ENCODE measurements at regions of chr15 and their contacts with region 1.

Region 1: DNA sequence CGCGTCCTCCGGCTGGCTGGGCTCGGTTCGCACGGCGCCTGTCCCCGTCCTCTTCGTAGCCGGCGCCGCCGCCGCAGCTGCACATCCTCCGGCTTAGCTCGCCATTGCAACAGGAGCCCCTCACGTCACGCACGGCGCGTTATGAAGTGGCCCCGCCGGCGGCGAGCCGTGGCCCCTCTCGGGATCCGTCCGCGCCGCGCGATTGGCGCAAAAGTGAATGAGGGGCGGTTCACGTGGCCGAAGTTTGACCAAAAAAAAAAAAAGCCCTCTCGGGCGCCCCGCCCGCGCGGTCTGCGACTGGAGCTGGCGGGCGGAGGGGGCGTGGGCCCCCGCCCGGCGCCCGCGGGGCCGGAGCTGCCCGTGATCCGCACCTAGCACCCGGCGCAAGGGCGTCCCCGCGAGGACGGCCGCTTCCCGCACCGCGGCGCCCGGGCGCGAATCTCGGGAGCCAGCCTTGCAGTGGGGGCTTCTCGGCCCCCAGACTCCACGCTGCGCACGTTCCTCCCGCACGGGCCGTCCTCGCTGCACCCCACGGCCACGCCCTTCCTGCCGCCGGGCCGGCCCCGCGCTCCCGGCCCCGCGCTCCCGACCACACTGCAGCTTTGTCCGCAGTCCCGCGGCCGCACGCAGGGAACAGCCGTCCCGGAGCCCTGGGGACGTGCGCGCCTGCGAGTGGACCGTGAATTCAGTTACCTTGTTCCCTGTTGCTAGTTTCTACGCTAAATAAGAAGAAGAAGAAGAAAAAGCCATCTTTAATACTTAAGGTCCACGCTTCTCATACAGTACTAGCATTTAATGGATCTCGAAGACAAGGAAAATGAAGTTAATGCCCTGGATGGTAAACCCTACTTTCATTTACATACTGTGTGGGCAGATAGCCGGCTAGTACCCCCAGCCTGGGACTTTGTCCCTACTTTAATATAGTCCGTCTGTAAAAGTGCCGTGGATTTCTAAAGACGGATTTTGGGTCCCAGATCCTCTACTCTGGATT is at the start of gene CHSY1:
- DNase-seq: peak; percentile 88
- ATAC-seq: peak; percentile 58
- H3K4me3 ChIP-seq: peak within 1 kb of the TSS; percentile 87
- H3K27ac ChIP-seq: no peak within 1 kb of the TSS
- H3K4me1 ChIP-seq: peaks cover 11% of the 10 kb centered on the region
- H3K27me3 ChIP-seq: no peaks in the 10 kb centered on the region
- CTCF ChIP-seq: 0 out of 2 replicates have a peak, but pooled peaks have one; percentile 20
- total RNA-seq, gene CHSY1: 13.8 and 19.5 TPM in 2 replicates

Region 2: GRCh38 chr15:101167753-101168463 is 84.2 kb before region 1 on chr15:
- CTCF ChIA-PET with region 1: no interaction called
- POLR2A ChIA-PET with region 1: interaction called, 6 read pairs
- intact Hi-C with region 1: loop called (anchors 1 kb)
- DNase-seq: peak; percentile 93
- ATAC-seq: peak; percentile 81
- H3K4me3 ChIP-seq: peak overlapping the region; percentile 55
- H3K27ac ChIP-seq: peak overlapping the region; percentile 94
- H3K4me1 ChIP-seq: peaks cover 53% of the 10 kb centered on the region
- H3K27me3 ChIP-seq: no peaks in the 10 kb centered on the region
- CTCF ChIP-seq: no peak

Region 3: GRCh38 chr15:101188637-101189408 is 63.3 kb before region 1 on chr15:
- CTCF ChIA-PET with region 1: no interaction called
- POLR2A ChIA-PET with region 1: no interaction called
- intact Hi-C with region 1: loop called (anchors 5 kb)
- DNase-seq: peak; percentile 29
- ATAC-seq: peak; percentile 73
- H3K4me3 ChIP-seq: peak overlapping the region; percentile 46
- H3K27ac ChIP-seq: 0 out of 2 replicates have a peak overlapping the region, but pooled peaks have one; percentile 14
- H3K4me1 ChIP-seq: peaks cover 20% of the 10 kb centered on the region; the same call in 1 of the 2 replicates
- H3K27me3 ChIP-seq: no peaks in the 10 kb centered on the region
- CTCF ChIP-seq: no peak

Region 4: GRCh38 chr15:101201406-101202174 is 50.5 kb before region 1 on chr15:
- CTCF ChIA-PET with region 1: no interaction called
- POLR2A ChIA-PET with region 1: no interaction called
- intact Hi-C with region 1: loop called (anchors 5 kb)
- DNase-seq: peak; percentile 85
- ATAC-seq: peak; percentile 91
- H3K4me3 ChIP-seq: no peak overlapping the region
- H3K27ac ChIP-seq: peak overlapping the region; percentile 63
- H3K4me1 ChIP-seq: peaks cover 33% of the 10 kb centered on the region
- H3K27me3 ChIP-seq: no peaks in the 10 kb centered on the region
- CTCF ChIP-seq: no peak

Region 5: DNA sequence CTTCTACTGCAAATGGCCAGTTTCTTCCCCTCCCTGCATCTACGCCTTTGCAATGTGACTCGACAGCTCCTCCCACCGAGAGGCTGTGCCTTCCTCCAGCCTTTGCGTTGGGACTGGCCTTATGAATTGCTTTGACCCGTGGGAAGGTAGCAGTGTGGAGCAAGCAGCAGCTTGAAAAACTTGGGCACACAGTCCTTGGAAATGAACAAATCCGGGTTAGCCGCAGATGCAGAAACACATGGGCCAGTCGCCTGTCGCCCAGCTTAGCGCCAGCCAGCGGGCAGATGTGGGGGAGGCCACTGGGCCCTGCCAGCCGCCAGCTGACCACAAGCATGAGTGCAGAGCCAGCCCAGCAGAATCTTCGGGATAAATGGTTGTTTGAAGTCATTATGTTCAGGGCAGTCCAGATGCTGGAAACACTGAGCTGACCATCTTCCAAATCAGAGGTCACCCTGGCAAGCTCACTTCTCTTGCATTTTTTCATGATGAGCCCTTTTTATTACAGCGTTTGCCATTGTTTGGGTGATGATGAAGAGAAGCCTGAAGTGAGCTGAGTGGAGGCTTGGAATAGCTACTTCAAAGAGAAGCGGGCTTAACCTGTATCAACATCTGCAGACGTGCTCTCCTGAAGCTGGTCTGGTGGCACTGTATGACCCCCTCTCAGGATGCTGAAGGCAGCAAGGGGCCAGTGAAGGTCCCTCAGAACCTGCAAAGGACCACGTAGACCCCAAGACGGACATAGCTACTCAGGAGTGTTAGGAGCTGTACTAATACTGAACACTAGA is 15.4 kb after region 1 on chr15:
- CTCF ChIA-PET with region 1: no interaction called
- POLR2A ChIA-PET with region 1: no interaction called
- intact Hi-C with region 1: no loop called
- DNase-seq: peak; percentile 13
- ATAC-seq: peak; percentile 32
- H3K4me3 ChIP-seq: no peak overlapping the region
- H3K27ac ChIP-seq: no peak overlapping the region
- H3K4me1 ChIP-seq: no peaks in the 10 kb centered on the region
- H3K27me3 ChIP-seq: no peaks in the 10 kb centered on the region
- CTCF ChIP-seq: no peak

Measured in PC-3 (cell line).